ENCODE measurements at regions of chr6 and their contacts with region 1.

Region 1: DNA sequence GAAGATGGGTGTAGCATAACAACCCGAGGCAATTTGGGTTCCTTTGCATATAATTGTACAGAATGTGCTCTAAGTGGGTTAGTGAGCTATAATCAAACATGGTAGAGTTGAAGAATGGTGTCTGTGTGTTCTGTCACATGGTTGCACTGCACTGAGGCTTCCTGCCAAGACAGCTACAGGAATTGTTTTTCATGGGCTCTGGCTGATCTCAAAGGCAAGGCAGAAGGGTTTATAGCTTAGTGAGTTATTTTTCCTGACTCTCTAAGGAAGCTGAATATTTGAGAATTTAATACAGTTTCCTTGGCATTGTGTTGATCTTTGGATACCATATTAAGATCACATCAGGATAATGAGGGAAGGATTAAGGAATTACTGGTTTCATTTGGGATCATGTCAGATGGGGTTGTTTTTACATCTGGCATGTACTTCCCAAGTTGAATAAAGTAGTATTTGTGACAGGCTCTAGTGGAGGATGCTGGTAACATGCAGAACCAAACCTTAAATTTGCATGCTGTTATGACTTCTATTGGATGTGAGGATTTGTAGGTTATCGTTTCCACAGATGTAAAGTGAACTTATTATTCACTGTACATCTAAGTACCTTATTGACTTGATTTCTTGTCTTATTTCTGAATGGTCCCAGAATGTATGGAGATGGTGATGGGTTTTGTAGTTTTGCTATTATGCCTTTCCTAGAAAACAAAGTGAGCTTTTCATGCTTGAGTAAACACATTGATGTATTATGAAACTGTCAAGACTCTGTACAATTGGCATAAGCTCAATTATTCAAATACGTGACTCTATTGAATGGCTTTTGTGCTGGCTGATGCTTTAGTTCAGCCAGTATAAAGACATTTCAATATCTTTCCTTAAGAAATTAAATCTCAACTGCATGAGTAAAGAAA is 43.3 kb downstream of the LRRC1 start:
- DNase-seq: no peak
- H3K4me3 Mint-ChIP-seq: no peak overlapping the region
- H3K27ac Mint-ChIP-seq: no peak overlapping the region
- H3K4me1 Mint-ChIP-seq: no peaks in the 10 kb centered on the region
- H3K27me3 Mint-ChIP-seq: peaks cover 5% of the 10 kb centered on the region

Region 2: DNA sequence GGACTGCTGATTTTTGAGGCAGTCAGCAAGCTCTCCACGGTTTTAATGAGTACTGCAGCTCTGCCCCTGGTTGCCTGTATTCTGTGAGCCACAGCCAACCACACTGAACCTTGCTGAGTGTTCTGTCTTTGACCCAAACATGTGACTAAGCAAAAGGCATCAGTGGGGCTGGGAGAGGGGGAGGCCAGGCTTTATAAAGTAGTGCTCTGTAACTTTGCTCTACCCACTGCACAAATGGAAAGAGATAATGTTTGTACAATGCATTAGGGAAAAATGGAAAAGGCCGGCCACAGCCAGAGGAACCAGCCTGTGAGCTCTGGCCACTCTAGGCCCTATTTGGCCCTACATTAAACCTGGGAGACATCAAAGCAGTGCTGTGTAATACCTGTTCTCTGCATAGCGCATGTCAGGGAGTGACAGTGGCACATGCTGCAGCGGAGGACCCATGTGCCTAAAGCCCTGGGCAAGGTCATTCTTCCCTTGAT is 194.6 kb before region 1 on chr6:
- intact Hi-C with region 1: no loop called
- DNase-seq: no peak
- H3K4me3 Mint-ChIP-seq: no peak overlapping the region
- H3K27ac Mint-ChIP-seq: no peak overlapping the region
- H3K4me1 Mint-ChIP-seq: peaks cover 20% of the 10 kb centered on the region
- H3K27me3 Mint-ChIP-seq: peaks cover under 1% of the 10 kb centered on the region

Region 3: GRCh38 chr6:53961679-53962370 is 123.7 kb after region 1 on chr6:
- intact Hi-C with region 1: loop called (anchors 10 kb)
- DNase-seq: no peak
- H3K4me3 Mint-ChIP-seq: no peak overlapping the region
- H3K27ac Mint-ChIP-seq: no peak overlapping the region
- H3K4me1 Mint-ChIP-seq: no peaks in the 10 kb centered on the region
- H3K27me3 Mint-ChIP-seq: peaks cover 3% of the 10 kb centered on the region